ENCODE measurements at regions of chr1 and their contacts with region 1.

Region 1: GRCh38 chr1:9196129-9197040 is 38.2 kb upstream of the H6PD start:
- DNase-seq: peak; percentile 51
- ATAC-seq: peak; percentile 82
- H3K4me3 Mint-ChIP-seq: peak overlapping the region; percentile 57
- H3K27ac Mint-ChIP-seq: no peak overlapping the region
- H3K4me1 Mint-ChIP-seq: peaks cover 16% of the 10 kb centered on the region
- H3K27me3 Mint-ChIP-seq: peaks cover 33% of the 10 kb centered on the region
- CTCF ChIP-seq: no peak

Region 2: GRCh38 chr1:9145021-9145668 is 51.2 kb before region 1 on chr1:
- CTCF ChIA-PET with region 1: interaction called, 21 read pairs
- POLR2A ChIA-PET with region 1: interaction called, 5 read pairs
- intact Hi-C with region 1: loop called (anchors 1 kb)
- DNase-seq: no peak
- ATAC-seq: no peak
- H3K4me3 Mint-ChIP-seq: no peak overlapping the region
- H3K27ac Mint-ChIP-seq: no peak overlapping the region
- H3K4me1 Mint-ChIP-seq: peaks cover 3% of the 10 kb centered on the region
- H3K27me3 Mint-ChIP-seq: peaks cover 3% of the 10 kb centered on the region
- CTCF ChIP-seq: no peak

Region 3: GRCh38 chr1:9166289-9167235 is 29.8 kb before region 1 on chr1:
- CTCF ChIA-PET with region 1: no interaction called
- POLR2A ChIA-PET with region 1: interaction called, 3 read pairs
- intact Hi-C with region 1: loop called (anchors 1 kb)
- DNase-seq: no peak
- ATAC-seq: no peak
- H3K4me3 Mint-ChIP-seq: no peak overlapping the region
- H3K27ac Mint-ChIP-seq: no peak overlapping the region
- H3K4me1 Mint-ChIP-seq: peaks cover 28% of the 10 kb centered on the region
- H3K27me3 Mint-ChIP-seq: no peaks in the 10 kb centered on the region
- CTCF ChIP-seq: no peak

Region 4: DNA sequence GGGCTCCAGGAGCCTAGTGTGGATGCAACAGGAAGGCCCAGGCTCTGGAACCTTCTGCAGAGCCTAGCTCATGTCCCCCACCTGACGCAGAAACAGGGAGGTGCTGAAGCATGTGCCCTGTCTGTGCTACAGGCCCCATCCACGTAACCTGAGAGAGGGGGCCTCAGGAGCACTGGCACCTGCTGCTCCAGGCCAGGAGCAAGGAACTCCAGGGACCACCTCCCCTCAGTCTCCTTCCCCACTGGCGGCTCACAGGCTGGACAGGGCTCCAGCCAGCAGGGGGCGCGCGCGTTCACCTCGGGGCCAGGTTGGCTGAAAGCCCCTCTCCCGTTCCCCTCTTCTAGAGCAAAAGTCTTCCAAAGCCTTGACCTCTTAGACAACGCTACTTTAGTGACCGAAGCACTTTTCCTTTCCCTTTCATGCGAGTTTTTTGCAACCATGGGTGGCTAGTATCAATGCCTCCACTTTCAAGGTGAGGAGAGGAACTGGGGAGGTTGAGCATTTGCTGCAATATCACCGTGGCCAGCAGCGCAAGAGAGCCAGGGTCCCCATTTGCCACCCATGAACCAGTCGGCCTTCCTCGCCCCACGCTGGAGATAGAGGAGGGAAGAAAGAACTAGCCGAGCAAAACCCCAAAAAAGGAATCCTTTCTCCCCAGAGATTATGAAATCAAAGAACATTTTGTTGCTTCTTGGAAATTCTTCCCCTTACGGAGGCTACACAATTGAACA is 15.0 kb before region 1 on chr1:
- CTCF ChIA-PET with region 1: no interaction called
- POLR2A ChIA-PET with region 1: no interaction called
- intact Hi-C with region 1: loop called (anchors 1 kb)
- DNase-seq: peak; percentile 73
- ATAC-seq: peak; percentile 59
- H3K4me3 Mint-ChIP-seq: peak overlapping the region; percentile 82
- H3K27ac Mint-ChIP-seq: no peak overlapping the region
- H3K4me1 Mint-ChIP-seq: peaks cover 19% of the 10 kb centered on the region
- H3K27me3 Mint-ChIP-seq: peaks cover 19% of the 10 kb centered on the region
- CTCF ChIP-seq: peak; percentile 91

Region 5: GRCh38 chr1:9242338-9242969 is 46.1 kb after region 1 on chr1:
- CTCF ChIA-PET with region 1: no interaction called
- POLR2A ChIA-PET with region 1: no interaction called
- intact Hi-C with region 1: no loop called
- DNase-seq: no peak
- ATAC-seq: no peak
- H3K4me3 Mint-ChIP-seq: no peak overlapping the region
- H3K27ac Mint-ChIP-seq: no peak overlapping the region
- H3K4me1 Mint-ChIP-seq: peaks cover 33% of the 10 kb centered on the region
- H3K27me3 Mint-ChIP-seq: no peaks in the 10 kb centered on the region
- CTCF ChIP-seq: no peak